ENCODE measurements at regions of chr5 and their contacts with region 1.

Region 1: DNA sequence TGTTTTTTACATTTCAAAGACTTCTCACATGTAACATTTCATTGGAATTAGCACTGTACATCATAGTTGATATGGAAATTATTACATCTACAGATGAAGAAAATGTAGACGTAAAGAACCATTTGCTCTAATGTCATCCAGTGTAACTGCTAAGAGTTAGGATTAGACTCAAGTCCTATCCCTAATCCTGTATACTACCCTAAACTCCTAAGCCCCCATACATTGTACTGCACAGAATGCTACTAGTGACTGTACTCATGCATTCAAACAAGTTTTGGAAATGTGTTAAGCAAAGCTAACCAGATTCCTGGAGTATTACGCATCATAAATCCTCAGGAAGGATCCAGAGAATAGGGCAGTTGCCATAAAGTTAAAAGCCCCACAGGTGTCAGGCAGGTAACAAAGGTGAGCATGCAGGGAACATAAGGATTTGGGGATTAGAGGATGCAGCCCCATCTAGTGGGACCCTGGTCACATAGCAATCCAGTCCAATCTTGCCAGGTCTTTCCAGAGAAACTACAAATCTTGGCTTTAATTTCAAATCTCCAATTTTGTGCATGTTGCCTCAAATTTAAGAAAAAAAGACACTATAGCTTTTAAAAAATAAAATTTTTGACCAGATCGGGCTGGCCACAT is 32.0 kb downstream of the HAVCR1 start:
- DNase-seq: peak; percentile 18
- ATAC-seq: no peak
- H3K4me3 Mint-ChIP-seq: no peak overlapping the region
- H3K27ac Mint-ChIP-seq: peak overlapping the region; percentile 49
- H3K4me1 Mint-ChIP-seq: peaks cover 80% of the 10 kb centered on the region
- H3K27me3 Mint-ChIP-seq: no peaks in the 10 kb centered on the region
- CTCF ChIP-seq: peak; percentile 85

Region 2: GRCh38 chr5:156850206-156850751 is 176.6 kb before region 1 on chr5 and contains the start of gene PPP1R2B:
- CTCF ChIA-PET with region 1: no interaction called
- POLR2A ChIA-PET with region 1: no interaction called
- intact Hi-C with region 1: no loop called
- DNase-seq: no peak
- ATAC-seq: no peak
- H3K4me3 Mint-ChIP-seq: no peak within 1 kb of the TSS
- H3K27ac Mint-ChIP-seq: no peak within 1 kb of the TSS
- H3K4me1 Mint-ChIP-seq: no peaks in the 10 kb centered on the region
- H3K27me3 Mint-ChIP-seq: peaks cover 19% of the 10 kb centered on the region
- CTCF ChIP-seq: no peak
- total RNA-seq, gene PPP1R2B: 0.16 TPM in 1 of 2 experiments, not detected in the other

Region 3: GRCh38 chr5:156920042-156920860 is 106.7 kb before region 1 on chr5:
- CTCF ChIA-PET with region 1: interaction called, 27 read pairs
- POLR2A ChIA-PET with region 1: interaction called, 6 read pairs
- intact Hi-C with region 1: loop called (anchors 2 kb)
- DNase-seq: peak; percentile 90
- ATAC-seq: peak; percentile 77
- H3K4me3 Mint-ChIP-seq: peak overlapping the region; percentile 63
- H3K27ac Mint-ChIP-seq: peak overlapping the region; percentile 88
- H3K4me1 Mint-ChIP-seq: peaks cover 58% of the 10 kb centered on the region
- H3K27me3 Mint-ChIP-seq: no peaks in the 10 kb centered on the region
- CTCF ChIP-seq: no peak

Region 4: GRCh38 chr5:157072508-157072907 is 45.6 kb after region 1 on chr5:
- CTCF ChIA-PET with region 1: interaction called, 4 read pairs
- POLR2A ChIA-PET with region 1: interaction called, 5 read pairs
- intact Hi-C with region 1: loop called (anchors 5 kb)
- DNase-seq: peak; percentile 67
- ATAC-seq: peak; percentile 74
- H3K4me3 Mint-ChIP-seq: no peak overlapping the region
- H3K27ac Mint-ChIP-seq: peak overlapping the region; percentile 12
- H3K4me1 Mint-ChIP-seq: peaks cover 30% of the 10 kb centered on the region
- H3K27me3 Mint-ChIP-seq: no peaks in the 10 kb centered on the region
- CTCF ChIP-seq: no peak

Region 5: DNA sequence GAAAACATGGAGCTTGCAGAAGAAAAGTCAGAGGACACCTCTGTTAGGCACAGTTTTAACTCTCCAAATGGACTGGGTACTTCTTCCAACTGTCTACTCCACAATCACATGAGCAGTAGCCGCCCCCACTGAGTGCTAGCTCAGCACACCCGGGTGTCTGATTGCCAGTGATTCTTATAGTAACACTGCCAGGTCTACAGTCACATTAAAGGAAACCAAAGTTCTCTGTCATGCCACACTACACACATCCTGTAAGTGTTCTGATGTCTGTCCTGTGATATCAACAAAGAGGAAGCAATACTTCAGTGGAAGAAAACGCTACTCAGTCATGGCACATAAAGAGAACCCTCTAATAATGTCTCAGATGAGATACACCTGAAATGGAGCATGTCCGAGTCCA is 82.1 kb after region 1 on chr5 and contains the start of gene HAVCR2:
- CTCF ChIA-PET with region 1: interaction called, 3 read pairs
- POLR2A ChIA-PET with region 1: interaction called, 4 read pairs
- intact Hi-C with region 1: loop called (anchors 5 kb)
- DNase-seq: peak; percentile 88
- ATAC-seq: peak; percentile 91
- H3K4me3 Mint-ChIP-seq: peak within 1 kb of the TSS; percentile 78
- H3K27ac Mint-ChIP-seq: peak within 1 kb of the TSS; percentile 94
- H3K4me1 Mint-ChIP-seq: peaks cover 55% of the 10 kb centered on the region
- H3K27me3 Mint-ChIP-seq: no peaks in the 10 kb centered on the region
- CTCF ChIP-seq: no peak
- total RNA-seq, gene HAVCR2: 28.7 to 34.6 TPM

Region 6: DNA sequence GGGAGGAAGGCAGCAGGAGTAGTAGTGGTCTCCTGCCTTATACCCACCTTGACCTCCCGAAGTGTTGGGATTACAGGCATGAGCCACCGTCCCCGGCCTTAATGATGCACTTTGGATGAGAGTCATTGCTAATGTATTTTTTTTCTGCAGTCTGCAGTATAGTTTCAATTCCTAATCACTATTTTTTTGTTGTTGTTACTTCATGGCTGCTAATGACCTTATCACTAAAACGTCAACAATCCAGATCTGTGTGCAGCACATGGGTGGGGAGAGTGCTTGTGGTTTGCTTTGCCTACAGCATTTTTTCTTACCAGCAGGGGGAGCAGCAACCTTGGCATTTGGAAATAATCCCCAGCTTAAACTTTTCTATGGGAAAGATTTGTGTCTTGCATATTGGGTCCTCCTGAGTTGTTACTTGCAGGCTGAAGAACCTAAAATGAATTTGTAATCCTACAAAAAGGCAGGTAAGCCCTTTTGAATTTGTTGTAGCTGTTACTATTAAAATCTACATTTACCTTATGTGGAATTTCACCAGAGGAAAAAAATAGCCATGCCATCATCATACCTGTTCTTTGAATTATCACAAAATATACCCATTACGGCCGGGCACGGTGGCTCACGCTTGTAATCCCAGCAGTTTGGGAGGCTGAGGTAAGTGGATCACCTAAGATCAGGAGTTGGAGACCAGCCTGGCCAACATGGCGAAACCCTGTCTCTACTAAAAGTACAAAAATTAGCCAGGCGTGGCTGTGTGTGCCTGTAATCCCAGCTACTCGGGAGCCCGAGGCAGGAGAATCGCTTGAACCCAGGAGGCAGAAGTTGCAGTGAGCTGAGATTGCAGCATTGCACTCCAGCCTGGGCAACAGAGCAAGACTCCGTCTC is 122.1 kb after region 1 on chr5:
- CTCF ChIA-PET with region 1: no interaction called
- POLR2A ChIA-PET with region 1: no interaction called
- intact Hi-C with region 1: no loop called
- DNase-seq: peak; percentile 91
- ATAC-seq: peak; percentile 45
- H3K4me3 Mint-ChIP-seq: peak overlapping the region; percentile 6
- H3K27ac Mint-ChIP-seq: peak overlapping the region; percentile 80
- H3K4me1 Mint-ChIP-seq: peaks cover 46% of the 10 kb centered on the region
- H3K27me3 Mint-ChIP-seq: no peaks in the 10 kb centered on the region
- CTCF ChIP-seq: peak; percentile 89

Region 7: GRCh38 chr5:157651623-157652549 is 625.0 kb after region 1 on chr5 and contains the start of gene SOX30:
- CTCF ChIA-PET with region 1: no interaction called
- POLR2A ChIA-PET with region 1: no interaction called
- intact Hi-C with region 1: no loop called
- DNase-seq: peak; percentile 86
- ATAC-seq: peak; percentile 99
- H3K4me3 Mint-ChIP-seq: peak within 1 kb of the TSS; percentile 68
- H3K27ac Mint-ChIP-seq: peak within 1 kb of the TSS; percentile 79
- H3K4me1 Mint-ChIP-seq: peaks cover 10% of the 10 kb centered on the region
- H3K27me3 Mint-ChIP-seq: no peaks in the 10 kb centered on the region
- CTCF ChIP-seq: no peak
- total RNA-seq, gene SOX30: 0.11 to 0.16 TPM

Measured in activated CD8-positive, alpha-beta T cell treated with anti-CD3 and anti-CD28 coated beads for 36 hours (primary cell).